Heart left ventricle (tissue), 16 donors: ENCODE measurements at regions of chr15 and their contacts with region 1.

Region 1: DNA sequence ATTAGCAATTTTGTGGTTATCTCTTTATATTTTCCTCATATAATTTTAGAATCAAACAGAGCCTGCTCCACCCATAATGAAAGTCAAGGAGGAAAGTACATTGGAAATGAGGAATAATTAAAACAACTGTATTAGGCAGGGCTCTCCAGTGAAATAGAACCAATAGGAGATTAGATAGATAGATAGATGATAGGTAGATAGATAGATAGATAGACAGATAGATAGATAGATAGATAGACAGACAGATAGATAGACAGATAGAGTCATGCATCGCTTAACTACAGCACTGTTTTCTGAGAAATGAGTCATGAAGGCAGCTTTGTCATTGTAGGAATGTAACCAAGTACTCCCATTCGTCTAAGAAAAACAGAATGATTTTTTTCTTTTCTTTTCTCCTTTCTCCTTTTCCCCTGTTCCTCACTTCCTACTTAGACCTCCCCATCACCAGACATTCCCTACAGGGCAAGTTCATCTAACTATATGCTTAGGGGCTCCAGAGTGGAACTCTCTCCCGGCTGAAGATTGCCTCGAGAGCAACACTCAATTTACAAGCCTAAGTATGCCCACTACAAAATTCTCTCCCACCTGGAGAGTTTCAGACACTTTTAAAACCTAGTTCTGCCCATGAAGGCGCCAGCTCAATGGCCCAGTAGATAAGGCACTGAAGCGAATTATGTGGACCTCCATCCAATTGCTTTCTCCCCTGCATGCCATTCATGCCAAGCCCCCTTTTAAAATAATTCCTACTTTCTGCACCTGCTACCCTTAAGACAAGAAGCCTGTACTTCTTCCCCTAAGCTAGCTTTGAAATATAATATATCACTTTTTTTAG is 53.3 kb upstream of the LIPC start:
- DNase-seq: no peak
- ATAC-seq: no peak
- H3K4me3 ChIP-seq: no peak overlapping the region
- H3K27ac ChIP-seq: no peak overlapping the region
- H3K4me1 ChIP-seq: no peaks in the 10 kb centered on the region
- H3K27me3 ChIP-seq: no peaks in the 10 kb centered on the region
- CTCF ChIP-seq: no peak
- POLR2A ChIP-seq: no peak

Region 2: GRCh38 chr15:57972864-57973263 is 405.6 kb before region 1 on chr15:
- intact Hi-C with region 1: no loop called
- DNase-seq: no peak
- ATAC-seq: peak in 1 of 4 donors; percentile 16
- H3K4me3 ChIP-seq: no peak overlapping the region
- H3K27ac ChIP-seq: no peak overlapping the region
- H3K4me1 ChIP-seq: peaks cover 0 to 15% (median 0%) of the 10 kb centered on the region in 12 donors
- H3K27me3 ChIP-seq: no peaks in the 10 kb centered on the region
- CTCF ChIP-seq: no peak
- POLR2A ChIP-seq: no peak

Region 3: GRCh38 chr15:58423831-58424608 is 45.5 kb after region 1 on chr15:
- intact Hi-C with region 1: loop called in 1 of 10 experiments (anchors 10 kb)
- DNase-seq: no peak
- ATAC-seq: peak in 2 of 4 donors; percentile 31 to 50
- H3K4me3 ChIP-seq: no peak overlapping the region
- H3K27ac ChIP-seq: no peak overlapping the region
- H3K4me1 ChIP-seq: peaks cover 0 to 11% (median 0%) of the 10 kb centered on the region in 12 donors
- H3K27me3 ChIP-seq: no peaks in the 10 kb centered on the region
- CTCF ChIP-seq: no peak
- POLR2A ChIP-seq: no peak